ENCODE measurements at regions of chr21 and their contacts with region 1.

Region 1: GRCh38 chr21:35779690-35780570 is 280.4 kb downstream of the SETD4 start:
- DNase-seq: no peak
- H3K4me3 Mint-ChIP-seq: no peak overlapping the region
- H3K27ac Mint-ChIP-seq: no peak overlapping the region
- H3K4me1 Mint-ChIP-seq: no peaks in the 10 kb centered on the region
- H3K27me3 Mint-ChIP-seq: peaks cover 3% of the 10 kb centered on the region

Region 2: GRCh38 chr21:35664683-35665082 is 115.2 kb before region 1 on chr21:
- intact Hi-C with region 1: no loop called
- DNase-seq: no peak
- H3K4me3 Mint-ChIP-seq: no peak overlapping the region
- H3K27ac Mint-ChIP-seq: no peak overlapping the region
- H3K4me1 Mint-ChIP-seq: no peaks in the 10 kb centered on the region
- H3K27me3 Mint-ChIP-seq: peaks cover 14% of the 10 kb centered on the region

Region 3: GRCh38 chr21:35932232-35932911 is 152.4 kb after region 1 on chr21:
- intact Hi-C with region 1: loop called (anchors 10 kb)
- DNase-seq: no peak
- H3K4me3 Mint-ChIP-seq: no peak overlapping the region
- H3K27ac Mint-ChIP-seq: no peak overlapping the region
- H3K4me1 Mint-ChIP-seq: no peaks in the 10 kb centered on the region
- H3K27me3 Mint-ChIP-seq: peaks cover 2% of the 10 kb centered on the region